ENCODE measurements at regions of chr3 and their contacts with region 1.

Region 1: DNA sequence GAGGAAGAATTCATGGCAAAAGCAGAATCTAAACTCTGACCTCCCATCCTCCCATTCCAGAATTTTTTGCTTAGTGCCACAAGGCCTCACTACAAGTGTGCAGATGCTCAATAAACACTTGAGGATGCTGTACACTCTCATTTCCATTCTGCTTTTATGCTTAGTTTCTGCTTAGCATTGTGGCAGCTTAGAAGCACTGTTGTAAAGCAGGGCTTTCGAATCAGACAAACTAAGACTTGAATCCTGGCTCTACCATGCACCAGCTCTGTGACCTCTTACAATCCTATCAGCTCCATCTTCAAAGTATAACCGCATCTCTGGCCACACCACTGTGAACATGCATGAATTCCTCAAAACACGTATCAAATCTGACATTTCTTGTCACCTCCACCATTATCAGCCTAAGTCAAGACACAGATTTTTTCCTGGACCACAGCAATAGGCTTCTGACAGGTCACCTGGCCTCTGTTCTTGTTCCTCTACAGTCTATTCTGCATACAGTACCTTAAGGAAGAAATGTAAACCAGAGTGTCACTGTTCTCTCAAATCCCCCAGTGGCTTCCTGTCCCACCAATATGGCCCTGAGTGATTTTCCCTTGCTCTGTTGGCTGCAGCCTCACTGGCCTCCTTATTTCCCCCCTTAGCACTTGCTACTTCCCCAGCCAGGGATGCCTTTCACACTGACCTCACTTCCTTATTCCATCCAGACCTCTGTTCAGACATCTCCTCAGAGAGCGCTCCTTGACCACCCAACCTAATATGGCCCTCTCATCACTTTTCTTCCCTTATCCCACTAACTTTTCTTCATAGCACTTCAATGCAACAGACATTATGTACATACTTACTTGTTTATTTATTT is 8.1 kb upstream of the PHC3 start:
- DNase-seq: no peak
- H3K4me3 Mint-ChIP-seq: no peak overlapping the region
- H3K27ac Mint-ChIP-seq: no peak overlapping the region
- H3K4me1 Mint-ChIP-seq: peaks cover 13% of the 10 kb centered on the region
- H3K27me3 Mint-ChIP-seq: no peaks in the 10 kb centered on the region
- CTCF ChIP-seq: no peak

Region 2: GRCh38 chr3:170144437-170144843 is 45.2 kb before region 1 on chr3:
- CTCF ChIA-PET with region 1: no interaction called
- intact Hi-C with region 1: no loop called
- DNase-seq: no peak
- H3K4me3 Mint-ChIP-seq: no peak overlapping the region
- H3K27ac Mint-ChIP-seq: no peak overlapping the region
- H3K4me1 Mint-ChIP-seq: peaks cover 15% of the 10 kb centered on the region
- H3K27me3 Mint-ChIP-seq: no peaks in the 10 kb centered on the region
- CTCF ChIP-seq: no peak

Region 3: GRCh38 chr3:170247875-170248274 is 58.2 kb after region 1 on chr3:
- CTCF ChIA-PET with region 1: no interaction called
- intact Hi-C with region 1: no loop called
- DNase-seq: no peak
- H3K4me3 Mint-ChIP-seq: no peak overlapping the region
- H3K27ac Mint-ChIP-seq: no peak overlapping the region
- H3K4me1 Mint-ChIP-seq: peaks cover 30% of the 10 kb centered on the region
- H3K27me3 Mint-ChIP-seq: no peaks in the 10 kb centered on the region
- CTCF ChIP-seq: no peak

Region 4: DNA sequence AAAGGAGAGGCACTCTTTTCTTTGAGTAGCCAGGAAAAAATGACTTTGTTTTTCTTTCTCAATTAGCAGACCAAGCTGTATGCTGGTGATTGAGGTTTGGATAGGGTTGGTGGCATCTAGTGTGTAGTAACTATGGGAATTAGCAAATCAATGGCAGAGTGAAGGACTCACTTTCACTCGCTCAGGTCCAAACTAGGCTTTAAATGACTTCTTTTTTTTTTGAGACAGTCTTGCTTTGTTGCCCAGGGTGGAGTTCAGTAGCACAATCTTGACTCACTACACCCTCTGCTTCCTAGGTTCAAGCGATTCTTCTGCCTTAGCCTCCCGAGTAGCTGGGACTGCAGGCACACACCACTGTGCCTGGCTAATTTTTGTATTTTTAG is 68.5 kb after region 1 on chr3:
- CTCF ChIA-PET with region 1: interaction called, 3 read pairs
- intact Hi-C with region 1: loop called (anchors 2 kb)
- DNase-seq: no peak
- H3K4me3 Mint-ChIP-seq: peak overlapping the region; percentile 35
- H3K27ac Mint-ChIP-seq: peak overlapping the region; percentile 83
- H3K4me1 Mint-ChIP-seq: peaks cover 39% of the 10 kb centered on the region
- H3K27me3 Mint-ChIP-seq: no peaks in the 10 kb centered on the region
- CTCF ChIP-seq: no peak

Region 5: GRCh38 chr3:170277833-170278580 is 88.4 kb after region 1 on chr3:
- CTCF ChIA-PET with region 1: no interaction called
- intact Hi-C with region 1: loop called (anchors 5 kb)
- DNase-seq: no peak
- H3K4me3 Mint-ChIP-seq: peak overlapping the region; percentile 8
- H3K27ac Mint-ChIP-seq: peak overlapping the region; percentile 6
- H3K4me1 Mint-ChIP-seq: peaks cover 21% of the 10 kb centered on the region
- H3K27me3 Mint-ChIP-seq: no peaks in the 10 kb centered on the region
- CTCF ChIP-seq: no peak

Measured in Calu3 (cell line).